Aorta (tissue), 5 donors: ENCODE measurements at regions of chr14 and their contacts with region 1.

Region 1: DNA sequence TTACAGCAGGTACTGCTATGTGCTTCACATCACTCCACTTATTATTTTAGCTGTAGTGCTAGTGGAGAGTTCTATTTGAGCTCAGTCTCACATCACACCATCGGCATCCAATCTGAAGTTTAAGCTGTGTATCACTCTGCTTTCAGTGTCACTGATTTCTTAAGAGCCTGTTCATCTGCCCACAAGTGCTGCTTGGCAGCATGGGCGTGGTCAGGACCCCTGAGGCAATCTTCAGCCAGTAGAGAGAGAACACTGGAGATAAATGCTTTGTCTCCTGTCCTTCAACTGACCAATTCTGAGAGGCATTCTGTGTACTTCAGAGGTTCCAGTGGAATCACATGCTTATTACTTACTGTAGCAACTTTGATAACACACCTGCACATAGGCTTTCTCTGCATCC is 728.8 kb downstream of the RPS29 start:
- DNase-seq: no peak
- ATAC-seq: no peak
- H3K4me3 ChIP-seq: no peak overlapping the region
- H3K27ac ChIP-seq: no peak overlapping the region
- H3K4me1 ChIP-seq: no peaks in the 10 kb centered on the region
- H3K27me3 ChIP-seq: no peaks in the 10 kb centered on the region

Region 2: DNA sequence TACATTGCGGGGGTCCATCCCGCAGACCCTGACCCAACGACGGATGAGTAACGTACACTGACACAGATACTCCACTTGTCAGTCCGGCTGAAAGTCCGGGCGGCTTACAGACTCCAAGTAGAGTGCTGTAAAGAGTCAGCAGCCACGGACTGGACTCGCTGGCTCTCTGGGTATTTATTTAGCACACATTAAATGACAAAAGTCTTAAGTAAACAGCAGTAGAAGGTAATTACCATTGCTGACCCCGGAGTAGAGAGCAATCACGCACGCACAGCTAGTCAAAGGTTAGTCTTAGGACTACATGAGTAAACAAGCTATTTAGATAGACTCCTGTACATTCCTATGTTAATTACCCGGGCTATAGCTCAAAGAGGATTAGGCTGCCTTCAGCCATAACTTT is 52.1 kb before region 1 on chr14:
- intact Hi-C with region 1: loop called in 1 of 2 experiments (anchors 2 kb)
- DNase-seq: peak in 1 of 2 donors; percentile 57
- ATAC-seq: no peak
- H3K4me3 ChIP-seq: no peak overlapping the region
- H3K27ac ChIP-seq: no peak overlapping the region
- H3K4me1 ChIP-seq: peaks cover 0 to 3% of the 10 kb centered on the region in 2 donors
- H3K27me3 ChIP-seq: no peaks in the 10 kb centered on the region